K562 (cell line): ENCODE measurements at regions of chr18 and their contacts with region 1.

Region 1: GRCh38 chr18:11733031-11733430 is 44.0 kb downstream of the GNAL start:
- DNase-seq: peak; percentile 78 to 81 (median 78)
- ATAC-seq: peak; percentile 99
- H3K4me3 ChIP-seq: no peak overlapping the region
- H3K27ac ChIP-seq: no peak overlapping the region
- H3K4me1 ChIP-seq: peaks cover 0 to 4% of the 10 kb centered on the region in 2 experiments; a peak in 1 of 5 replicates
- H3K27me3 ChIP-seq: peaks cover 12 to 47% of the 10 kb centered on the region in 2 experiments
- CTCF ChIP-seq: peak; percentile 86 to 93 (median 92)
- EP300 ChIP-seq: no peak
- POLR2A ChIP-seq: no peak
- RAD21 ChIP-seq: peak; percentile 71 to 93

Region 2: DNA sequence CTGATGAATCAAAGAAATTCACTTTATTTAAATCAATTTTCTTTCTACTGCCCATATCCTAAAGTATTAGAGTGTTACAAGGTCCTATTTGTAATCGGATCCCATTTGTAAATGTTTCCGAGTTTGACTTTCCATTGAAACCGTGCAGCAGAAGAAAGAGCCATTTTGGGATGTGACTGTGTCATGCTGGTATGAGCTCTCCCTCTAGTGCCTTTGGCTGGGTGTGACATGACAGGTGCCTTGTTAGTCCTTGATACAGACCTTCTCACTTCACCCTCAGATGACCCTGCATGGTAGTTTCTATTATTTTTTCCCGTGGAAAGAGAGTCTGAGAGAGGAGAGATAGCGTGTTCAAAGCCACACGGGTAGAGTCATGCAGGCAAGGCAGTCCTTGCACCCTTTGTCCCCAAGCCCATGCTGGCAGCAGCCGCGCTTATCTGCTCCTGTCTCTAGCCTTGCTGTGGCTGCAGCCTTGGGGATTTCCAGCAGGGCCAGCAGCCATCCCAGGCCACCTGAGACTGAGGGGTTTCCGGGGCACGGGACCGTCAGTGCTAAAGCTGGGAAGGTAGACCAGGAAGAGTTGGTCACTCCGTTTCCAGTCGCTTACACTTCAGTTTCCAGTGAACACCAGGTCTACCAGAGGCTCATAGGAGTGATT is 139.6 kb after region 1 on chr18:
- CTCF ChIA-PET with region 1: interaction called, 22 read pairs
- POLR2A ChIA-PET with region 1: interaction called, 3 read pairs
- in situ Hi-C with region 1: no loop called
- intact Hi-C with region 1: loop called (anchors 1 kb)
- DNase-seq: peak; percentile 62 to 72 (median 68)
- ATAC-seq: peak; percentile 98
- H3K4me3 ChIP-seq: no peak overlapping the region
- H3K27ac ChIP-seq: no peak overlapping the region
- H3K4me1 ChIP-seq: peaks cover 0 to 3% of the 10 kb centered on the region in 2 experiments; a peak in 1 of 5 replicates
- H3K27me3 ChIP-seq: peaks cover 0 to 17% of the 10 kb centered on the region in 2 experiments; a peak in 4 of 5 replicates
- CTCF ChIP-seq: peak; percentile 72 to 84 (median 79)
- EP300 ChIP-seq: no peak
- POLR2A ChIP-seq: no peak
- RAD21 ChIP-seq: peak; percentile 79 to 95

Region 3: DNA sequence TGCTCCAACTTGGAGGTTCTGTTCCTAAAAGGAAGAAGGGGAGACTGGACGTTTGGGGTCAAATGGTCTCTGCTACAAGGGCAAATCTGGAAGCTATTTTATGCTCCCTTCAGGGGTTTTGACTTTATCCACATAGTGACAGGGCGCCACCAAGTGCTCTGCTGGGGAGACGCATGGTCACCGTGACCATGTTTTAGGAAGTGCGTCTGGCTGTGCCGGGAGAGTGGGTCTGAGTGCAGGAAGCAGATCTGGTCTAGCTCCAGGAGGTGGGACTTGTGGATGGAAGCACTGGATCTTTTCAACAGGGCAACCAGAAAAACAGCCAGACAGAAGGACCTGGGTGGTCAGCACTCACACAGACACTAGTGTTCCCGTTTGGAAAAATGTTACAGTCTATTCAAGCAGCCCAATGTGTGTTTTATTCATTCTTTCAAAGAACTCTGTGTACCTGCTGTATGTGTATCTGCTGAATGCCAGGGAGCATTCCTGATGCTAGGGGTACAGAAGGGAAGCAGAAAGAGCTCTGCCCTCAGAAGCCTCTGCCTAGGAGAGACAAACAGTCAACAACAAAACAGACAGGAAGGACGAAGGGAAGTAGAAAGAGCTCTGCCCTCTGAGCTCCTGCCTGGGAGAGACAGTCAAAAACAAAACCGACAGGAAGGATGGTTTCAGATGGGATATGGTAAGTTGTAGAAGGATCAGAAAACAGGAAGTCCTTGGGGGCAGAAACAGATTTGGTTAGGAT is 262.6 kb after region 1 on chr18:
- CTCF ChIA-PET with region 1: interaction called, 9 read pairs
- POLR2A ChIA-PET with region 1: no interaction called
- in situ Hi-C with region 1: loop called (anchors 10 kb)
- intact Hi-C with region 1: loop called (anchors 1 kb)
- DNase-seq: peak; percentile 65 to 83 (median 72)
- ATAC-seq: peak; percentile 95
- H3K4me3 ChIP-seq: no peak overlapping the region
- H3K27ac ChIP-seq: no peak overlapping the region
- H3K4me1 ChIP-seq: peaks cover 0 to 4% of the 10 kb centered on the region in 2 experiments; a peak in 2 of 5 replicates
- H3K27me3 ChIP-seq: peaks cover 0 to 4% of the 10 kb centered on the region in 2 experiments; a peak in 1 of 5 replicates
- CTCF ChIP-seq: peak; percentile 94 to 96 (median 96)
- EP300 ChIP-seq: no peak
- POLR2A ChIP-seq: no peak
- RAD21 ChIP-seq: peak; percentile 73 to 97